ENCODE measurements at regions of chr6 and their contacts with region 1.

Region 1: DNA sequence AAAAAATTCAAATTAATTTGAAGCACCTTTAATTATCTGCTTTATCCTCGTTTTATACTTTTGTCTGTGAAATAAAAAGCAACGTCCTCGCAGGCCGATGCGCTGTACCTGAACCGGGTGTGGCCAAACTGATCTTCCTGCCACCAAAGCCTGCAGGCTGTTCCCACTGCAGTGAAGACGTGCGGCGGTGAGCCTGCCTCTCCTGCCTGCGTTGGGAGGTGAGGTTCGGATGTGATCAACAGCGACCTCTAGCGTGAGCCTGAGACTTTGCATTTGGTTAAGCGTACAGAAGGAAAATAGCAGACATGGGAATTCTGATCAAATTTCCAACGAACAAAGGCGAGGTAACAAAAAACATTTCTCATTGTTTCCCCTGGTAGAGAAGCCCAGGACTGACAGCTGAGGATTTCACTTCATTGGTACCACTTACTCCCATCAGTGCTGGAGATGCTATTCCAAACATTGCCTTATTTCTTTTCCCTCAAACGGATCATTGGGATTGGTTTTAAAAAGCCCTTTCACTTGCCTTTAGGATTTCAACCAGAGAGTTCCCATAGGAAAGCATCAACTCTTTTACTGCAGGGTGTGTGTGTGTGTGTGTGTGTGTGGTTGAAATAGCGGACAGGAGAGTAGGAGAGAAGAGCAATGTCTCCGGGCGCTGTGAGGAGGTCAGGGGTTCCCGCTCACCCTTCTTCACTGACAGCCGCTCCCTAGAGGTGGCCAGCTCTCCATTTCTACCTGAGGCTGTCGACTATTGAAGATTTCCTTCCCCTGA is 56.6 kb upstream of the CCN6 start:
- DNase-seq: no peak
- H3K4me3 ChIP-seq: peak overlapping the region in 2 of 4 donors; percentile 7 to 38
- H3K27ac ChIP-seq: peak overlapping the region; percentile 22 to 53 (median 45)
- H3K4me1 ChIP-seq: peaks cover 0 to 12% (median 6%) of the 10 kb centered on the region in 4 donors
- H3K27me3 ChIP-seq: no peaks in the 10 kb centered on the region
- CTCF ChIP-seq: peak; percentile 88 to 95 (median 91)
- EP300 ChIP-seq: no peak
- POLR2A ChIP-seq: no peak

Region 2: GRCh38 chr6:111709615-111710398 is 287.5 kb before region 1 on chr6:
- intact Hi-C with region 1: loop called (anchors 2 kb)
- DNase-seq: no peak
- H3K4me3 ChIP-seq: peak overlapping the region in 2 of 4 donors; percentile 17 to 27
- H3K27ac ChIP-seq: peak overlapping the region in 1 of 4 donors; percentile 14
- H3K4me1 ChIP-seq: peaks cover 28 to 32% (median 32%) of the 10 kb centered on the region in 4 donors
- H3K27me3 ChIP-seq: no peaks in the 10 kb centered on the region
- CTCF ChIP-seq: peak; percentile 78 to 92 (median 79)
- EP300 ChIP-seq: no peak
- POLR2A ChIP-seq: no peak

Region 3: DNA sequence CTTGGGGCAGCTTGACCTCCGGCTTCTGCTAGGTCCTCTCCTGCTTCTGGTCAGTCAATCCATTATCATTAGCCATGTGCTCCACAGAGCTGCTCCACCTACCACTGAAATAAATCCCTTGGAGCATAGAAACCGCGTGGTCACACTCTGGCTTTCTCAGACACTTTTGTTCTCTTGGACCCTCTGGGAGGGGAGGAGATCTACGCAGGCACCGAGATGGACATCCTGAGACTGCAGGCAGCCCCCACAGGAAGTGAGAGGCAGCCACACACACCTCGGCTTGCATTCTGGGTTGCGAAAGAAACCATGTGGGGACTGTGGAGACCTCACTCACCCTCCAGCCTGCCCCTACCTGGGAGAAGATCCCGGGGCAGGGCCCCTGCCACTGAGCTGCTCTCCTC is 203.6 kb before region 1 on chr6:
- intact Hi-C with region 1: no loop called
- DNase-seq: no peak
- H3K4me3 ChIP-seq: no peak overlapping the region
- H3K27ac ChIP-seq: no peak overlapping the region
- H3K4me1 ChIP-seq: peaks cover 5 to 29% (median 17%) of the 10 kb centered on the region in 4 donors
- H3K27me3 ChIP-seq: no peaks in the 10 kb centered on the region
- CTCF ChIP-seq: no peak
- EP300 ChIP-seq: no peak
- POLR2A ChIP-seq: no peak

Region 4: GRCh38 chr6:111873178-111874024 is 123.9 kb before region 1 on chr6 and contains the start of gene FYN:
- intact Hi-C with region 1: loop called (anchors 5 kb)
- DNase-seq: peak; percentile 99
- H3K4me3 ChIP-seq: peak within 1 kb of the TSS; percentile 71 to 84 (median 73)
- H3K27ac ChIP-seq: peak within 1 kb of the TSS; percentile 68 to 84 (median 80)
- H3K4me1 ChIP-seq: peaks cover 3 to 29% (median 24%) of the 10 kb centered on the region in 4 donors
- H3K27me3 ChIP-seq: peaks cover 0 to 14% (median 0%) of the 10 kb centered on the region in 4 donors
- CTCF ChIP-seq: peak; percentile 31 to 66 (median 41)
- EP300 ChIP-seq: no peak
- POLR2A ChIP-seq: peak; percentile 59
- total RNA-seq, gene FYN: 37.8 to 65.8 (median 53.8) TPM

Region 5: DNA sequence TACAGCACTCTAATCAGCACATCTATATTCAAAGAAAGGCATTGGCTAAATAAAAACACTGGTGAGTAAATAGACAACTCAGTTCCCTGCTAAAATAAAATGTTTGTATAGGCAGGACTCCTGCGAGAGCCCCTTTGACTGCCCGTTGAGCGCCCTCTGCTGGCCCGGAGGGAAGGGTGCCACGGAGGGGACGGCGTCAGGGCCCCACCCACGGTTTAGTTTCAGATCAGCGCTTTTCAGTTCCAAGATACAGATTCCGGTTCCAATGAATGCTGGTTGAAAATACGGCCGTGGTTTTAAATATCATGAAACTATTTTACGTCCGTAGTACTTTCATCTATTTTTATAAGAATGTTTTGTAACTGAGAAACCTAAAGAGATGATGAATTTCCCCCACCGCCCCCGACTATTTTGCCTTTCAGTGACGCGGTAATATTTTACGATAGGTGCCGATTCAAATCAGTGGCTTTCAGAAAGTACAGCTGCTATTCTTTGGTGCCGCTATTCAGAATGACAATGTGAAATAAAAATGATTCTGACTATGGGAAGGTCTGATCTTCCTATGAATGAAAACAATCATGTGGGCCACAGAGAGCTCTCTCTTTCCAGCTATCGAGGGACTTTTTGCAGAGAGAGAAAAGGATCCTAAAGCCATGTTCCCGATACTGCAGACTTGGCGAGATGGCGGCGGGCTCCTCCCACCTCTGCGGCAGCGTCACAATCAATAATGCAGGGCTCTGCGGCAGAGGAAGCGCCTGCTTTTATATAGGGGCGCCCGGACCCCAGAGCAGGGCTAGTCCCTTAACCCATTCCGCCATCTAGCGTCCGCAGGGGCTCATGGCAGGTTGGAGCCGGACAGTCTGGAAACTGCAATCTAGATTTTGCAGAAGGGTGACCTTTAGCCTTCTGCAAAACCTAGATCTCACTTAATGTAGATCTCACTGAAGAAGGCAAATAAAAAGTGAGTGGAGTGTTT is 46.1 kb after region 1 on chr6:
- intact Hi-C with region 1: loop called (anchors 2 kb)
- DNase-seq: peak; percentile 97
- H3K4me3 ChIP-seq: peak overlapping the region; percentile 53 to 65 (median 58)
- H3K27ac ChIP-seq: peak overlapping the region; percentile 73 to 82 (median 75)
- H3K4me1 ChIP-seq: peaks cover 9 to 22% (median 19%) of the 10 kb centered on the region in 4 donors
- H3K27me3 ChIP-seq: no peaks in the 10 kb centered on the region
- CTCF ChIP-seq: peak; percentile 88 to 95 (median 93)
- EP300 ChIP-seq: no peak
- POLR2A ChIP-seq: no peak

Region 6: GRCh38 chr6:112337209-112337638 is 340.0 kb after region 1 on chr6:
- intact Hi-C with region 1: no loop called
- DNase-seq: no peak
- H3K4me3 ChIP-seq: no peak overlapping the region
- H3K27ac ChIP-seq: no peak overlapping the region
- H3K4me1 ChIP-seq: peaks cover 0 to 6% (median 0%) of the 10 kb centered on the region in 4 donors
- H3K27me3 ChIP-seq: no peaks in the 10 kb centered on the region
- CTCF ChIP-seq: peak; percentile 62 to 79 (median 72)
- EP300 ChIP-seq: no peak
- POLR2A ChIP-seq: no peak

Measured in esophagus muscularis mucosa (tissue), 4 donors.